ENCODE measurements at regions of chr20 and their contacts with region 1.

Region 1: GRCh38 chr20:37220731-37221130 is 40.9 kb downstream of the GHRH start:
- DNase-seq: no peak
- ATAC-seq: no peak
- H3K4me3 ChIP-seq: no peak overlapping the region
- H3K4me3 Mint-ChIP-seq: no peak overlapping the region
- H3K27ac ChIP-seq: no peak overlapping the region
- H3K27ac Mint-ChIP-seq: no peak overlapping the region
- H3K4me1 ChIP-seq: no peaks in the 10 kb centered on the region
- H3K4me1 Mint-ChIP-seq: no peaks in the 10 kb centered on the region
- H3K27me3 ChIP-seq: no peaks in the 10 kb centered on the region
- H3K27me3 Mint-ChIP-seq: no peaks in the 10 kb centered on the region

Region 2: DNA sequence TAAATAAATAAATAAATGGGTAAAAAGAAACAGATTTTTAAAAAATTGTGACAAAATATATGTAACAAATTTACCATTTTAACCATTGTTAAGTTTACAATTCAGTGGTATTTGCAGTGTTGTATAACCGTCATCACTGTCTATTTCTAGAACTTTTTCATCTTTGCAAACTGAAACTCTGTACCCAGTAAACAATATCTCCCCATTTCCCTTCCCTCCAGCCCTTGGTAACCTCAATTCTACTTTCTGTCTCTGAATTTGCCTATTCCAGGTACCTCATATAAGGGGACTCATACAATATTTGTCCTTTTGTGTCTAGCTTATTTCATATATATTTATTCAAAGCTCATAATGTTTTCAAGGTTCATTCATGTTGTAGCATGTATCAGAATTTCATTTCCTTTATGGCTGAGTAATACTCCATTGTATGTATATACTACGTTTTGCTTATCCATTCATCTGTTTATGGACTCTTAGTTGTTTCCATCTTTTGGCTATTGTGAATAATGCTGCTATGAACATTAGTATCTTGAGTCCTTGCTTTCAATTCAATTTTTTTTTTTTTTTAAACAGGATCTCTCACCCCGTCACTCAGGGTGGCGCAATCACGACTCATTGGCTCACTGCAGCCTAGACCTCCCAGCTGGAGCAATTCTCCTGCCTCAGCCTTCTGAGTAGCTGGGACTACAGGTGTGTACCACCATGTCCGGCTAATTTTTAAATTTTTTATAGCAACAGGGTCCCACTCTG is 77.6 kb after region 1 on chr20:
- CTCF ChIA-PET with region 1: no interaction called
- POLR2A ChIA-PET with region 1: interaction called in 1 of 2 experiments, 16 read pairs
- DNase-seq: no peak
- ATAC-seq: no peak
- H3K4me3 ChIP-seq: no peak overlapping the region
- H3K4me3 Mint-ChIP-seq: no peak overlapping the region
- H3K27ac ChIP-seq: no peak overlapping the region
- H3K27ac Mint-ChIP-seq: no peak overlapping the region
- H3K4me1 ChIP-seq: peaks cover 0 to 4% of the 10 kb centered on the region in 2 experiments
- H3K4me1 Mint-ChIP-seq: peaks cover 39 to 50% (median 47%) of the 10 kb centered on the region in 3 donors
- H3K27me3 ChIP-seq: no peaks in the 10 kb centered on the region
- H3K27me3 Mint-ChIP-seq: no peaks in the 10 kb centered on the region

Measured in T-cell (primary cell).